ENCODE measurements at regions of chr6 and their contacts with region 1.

Region 1: DNA sequence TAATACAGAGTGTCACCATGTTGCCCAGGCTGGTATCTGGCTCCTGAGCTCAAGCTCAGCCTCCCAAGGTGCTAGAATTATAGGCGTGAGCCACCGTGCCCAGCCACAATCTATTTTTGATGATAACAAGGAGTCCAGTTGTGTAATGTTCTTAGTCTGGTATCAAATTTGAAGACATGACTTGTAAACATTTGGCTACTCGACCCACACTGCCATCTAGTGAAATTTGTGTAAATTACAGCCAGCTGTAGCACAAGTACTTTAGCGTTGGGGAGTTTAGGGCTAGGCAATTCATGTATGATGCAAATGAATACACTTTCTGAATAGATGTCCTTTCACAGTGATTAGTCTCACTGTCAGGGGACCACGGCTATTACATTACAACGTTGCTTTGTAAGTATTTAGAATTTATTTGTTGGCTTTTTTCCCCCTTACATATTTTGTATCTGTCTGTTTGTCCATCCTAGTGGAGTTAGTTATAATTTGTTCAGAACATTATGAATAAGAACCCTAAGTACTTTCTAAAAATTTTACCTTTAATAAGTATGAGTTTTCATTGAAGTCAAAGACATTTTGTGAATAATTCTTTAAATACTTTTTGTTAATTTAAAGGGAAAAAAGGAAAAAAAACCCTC is 139.7 kb downstream of the PRDM13 start:
- DNase-seq: peak in 4 of 10 donors; percentile 41 to 76 (median 60)
- H3K4me3 ChIP-seq: no peak overlapping the region
- H3K27ac ChIP-seq: no peak overlapping the region
- H3K27me3 ChIP-seq: peaks cover 0 to 17% (median 0%) of the 10 kb centered on the region in 45 donors
- CTCF ChIP-seq: peak; percentile 68 to 96 (median 87)

Region 2: DNA sequence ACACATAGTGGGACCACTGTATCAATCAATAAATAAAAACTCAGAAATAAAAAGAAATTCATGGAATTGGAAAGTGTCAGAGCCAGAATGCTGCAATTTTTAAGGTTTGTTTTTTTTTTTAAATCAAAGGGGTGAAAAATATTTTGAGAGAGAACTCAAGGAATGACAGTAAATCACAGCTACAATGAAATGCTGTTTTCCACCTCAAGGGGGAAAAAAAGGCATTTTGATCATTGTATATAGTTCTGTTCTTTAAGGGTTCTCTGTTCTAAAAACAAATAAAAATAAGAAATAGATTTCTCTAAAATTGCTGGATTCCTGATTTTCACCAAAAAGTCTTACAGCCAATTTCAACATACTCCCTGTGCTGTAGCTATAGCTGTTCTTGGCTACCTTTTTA is 421.4 kb before region 1 on chr6:
- intact Hi-C with region 1: loop called in 1 of 2 experiments (anchors 10 kb)
- DNase-seq: no peak
- H3K4me3 ChIP-seq: no peak overlapping the region
- H3K27ac ChIP-seq: no peak overlapping the region
- H3K27me3 ChIP-seq: no peaks in the 10 kb centered on the region
- CTCF ChIP-seq: peak in 4 of 56 donors; percentile 7 to 20 (median 16)

Region 3: DNA sequence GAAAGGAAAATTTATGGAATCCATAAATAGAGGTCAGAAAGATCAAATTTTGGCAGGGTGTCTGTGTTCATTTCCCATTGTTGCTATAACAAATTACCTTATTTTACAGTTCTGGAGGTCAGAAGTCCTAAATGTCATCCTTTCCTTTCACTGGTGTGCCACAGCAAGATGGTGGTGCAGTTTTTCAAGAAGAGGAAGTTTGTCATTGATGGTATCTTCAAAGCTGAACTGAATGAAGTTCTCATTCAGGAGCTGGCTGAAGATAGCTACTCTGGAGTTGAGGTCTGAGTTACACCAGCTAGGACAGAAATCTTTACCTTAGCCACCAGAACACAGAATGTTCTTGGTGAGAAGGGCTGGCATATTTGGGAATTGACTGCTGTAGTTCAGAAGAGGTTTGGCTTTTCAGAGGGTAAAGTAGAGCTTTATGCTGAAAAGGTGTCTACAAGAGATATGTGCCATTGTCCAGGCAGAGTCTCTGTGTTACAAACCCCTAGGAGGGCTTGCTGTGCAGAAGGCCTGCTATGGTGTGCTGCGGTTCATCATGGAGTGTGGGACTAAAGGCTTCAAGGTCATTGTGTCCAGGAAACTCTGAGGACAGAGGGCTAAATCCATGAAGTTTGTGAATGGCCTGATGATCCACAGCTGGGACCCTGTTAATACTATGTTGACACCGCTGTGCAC is 170.7 kb before region 1 on chr6:
- intact Hi-C with region 1: no loop called
- DNase-seq: no peak
- H3K4me3 ChIP-seq: no peak overlapping the region
- H3K27ac ChIP-seq: no peak overlapping the region
- H3K27me3 ChIP-seq: peaks cover 0 to 8% (median 0%) of the 10 kb centered on the region in 45 donors
- CTCF ChIP-seq: no peak

Region 4: GRCh38 chr6:99790679-99791078 is 44.3 kb after region 1 on chr6:
- intact Hi-C with region 1: no loop called
- DNase-seq: no peak
- H3K4me3 ChIP-seq: no peak overlapping the region
- H3K27ac ChIP-seq: no peak overlapping the region
- H3K27me3 ChIP-seq: peaks cover 0 to 14% (median 0%) of the 10 kb centered on the region in 45 donors
- CTCF ChIP-seq: peak in 3 of 56 donors; percentile 12 to 14 (median 12)

Region 5: GRCh38 chr6:100099189-100100074 is 353.1 kb after region 1 on chr6:
- intact Hi-C with region 1: no loop called
- DNase-seq: no peak
- H3K4me3 ChIP-seq: no peak overlapping the region
- H3K27ac ChIP-seq: no peak overlapping the region
- H3K27me3 ChIP-seq: peaks cover 0 to 5% (median 0%) of the 10 kb centered on the region in 45 donors
- CTCF ChIP-seq: peak; percentile 49 to 87 (median 72)